IMR-90 (cell line): ENCODE measurements at regions of chr2 and their contacts with region 1.

Region 1: DNA sequence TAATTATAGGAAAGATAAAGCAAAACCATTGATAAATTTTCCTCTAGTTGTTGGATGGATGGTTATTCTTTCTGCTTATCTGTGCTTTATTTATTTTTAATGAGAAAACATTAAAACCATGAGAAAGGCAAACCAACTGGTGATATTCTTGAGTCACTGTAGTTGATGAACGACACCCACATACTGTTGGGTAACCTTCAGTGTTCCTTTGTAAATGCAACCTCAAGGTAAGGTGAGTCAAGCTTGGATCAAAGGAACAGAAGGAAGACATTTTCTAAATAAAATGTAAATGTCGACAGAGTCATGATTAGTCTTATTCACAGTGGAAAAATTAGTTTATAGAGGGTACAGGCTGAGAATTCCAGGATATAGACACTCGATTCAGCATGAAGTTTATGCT is 12.7 kb downstream of the ABCB11 start:
- DNase-seq: no peak
- ATAC-seq: no peak
- H3K4me3 ChIP-seq: no peak overlapping the region
- H3K27ac ChIP-seq: no peak overlapping the region
- H3K4me1 ChIP-seq: no peaks in the 10 kb centered on the region
- H3K27me3 ChIP-seq: no peaks in the 10 kb centered on the region
- CTCF ChIP-seq: no peak
- POLR2A ChIP-seq: no peak
- RAD21 ChIP-seq: no peak

Region 2: DNA sequence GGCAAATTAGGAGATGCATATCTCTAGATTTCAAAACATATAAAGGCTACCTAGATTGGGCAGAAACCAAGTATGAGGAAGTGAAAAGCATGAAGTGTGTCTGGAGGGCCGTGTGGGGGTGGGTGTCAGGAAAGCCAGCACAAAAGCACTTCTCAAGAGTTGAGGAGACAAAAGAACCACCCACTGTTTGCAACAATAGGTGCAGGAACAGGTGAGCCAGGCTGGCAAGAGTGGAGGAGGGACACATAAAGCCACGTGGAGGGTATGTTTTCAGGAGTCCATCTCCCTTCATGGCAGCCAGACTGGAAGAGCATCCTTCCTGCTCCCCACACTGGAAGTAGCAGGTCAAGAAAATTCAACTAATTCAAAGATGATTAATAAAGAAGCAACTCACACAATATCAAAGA is 465.9 kb before region 1 on chr2:
- CTCF ChIA-PET with region 1: no interaction called
- POLR2A ChIA-PET with region 1: no interaction called
- dilution Hi-C with region 1: no loop called
- in situ Hi-C with region 1: no loop called
- intact Hi-C with region 1: no loop called
- DNase-seq: no peak
- ATAC-seq: no peak
- H3K4me3 ChIP-seq: no peak overlapping the region
- H3K27ac ChIP-seq: no peak overlapping the region
- H3K4me1 ChIP-seq: no peaks in the 10 kb centered on the region
- H3K27me3 ChIP-seq: no peaks in the 10 kb centered on the region
- CTCF ChIP-seq: no peak
- POLR2A ChIP-seq: no peak
- RAD21 ChIP-seq: no peak

Region 3: DNA sequence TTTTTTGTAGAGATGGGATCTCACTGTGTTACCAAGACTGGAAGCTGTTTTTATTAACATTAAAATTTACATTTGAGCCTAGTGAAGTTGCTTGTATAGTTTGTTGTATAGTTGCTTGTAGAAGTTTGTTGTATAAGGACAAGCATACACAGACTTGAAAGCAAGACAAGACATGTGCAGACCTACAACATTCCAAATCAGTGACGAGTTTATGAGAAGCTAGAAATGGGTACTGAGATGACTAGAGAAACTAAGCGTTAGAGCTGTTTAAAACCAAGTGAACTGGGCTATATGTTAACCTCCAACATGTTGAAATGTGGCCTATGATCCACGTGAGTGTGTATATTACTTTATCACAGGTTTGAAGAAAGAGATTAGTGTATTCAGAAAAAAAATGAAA is 26.4 kb before region 1 on chr2:
- CTCF ChIA-PET with region 1: no interaction called
- POLR2A ChIA-PET with region 1: interaction called, 11 read pairs
- dilution Hi-C with region 1: no loop called
- in situ Hi-C with region 1: no loop called
- intact Hi-C with region 1: no loop called
- DNase-seq: peak; percentile 5
- ATAC-seq: peak; percentile 35; the same call in 1 of the 2 replicates
- H3K4me3 ChIP-seq: no peak overlapping the region
- H3K27ac ChIP-seq: no peak overlapping the region
- H3K4me1 ChIP-seq: no peaks in the 10 kb centered on the region
- H3K27me3 ChIP-seq: no peaks in the 10 kb centered on the region
- CTCF ChIP-seq: no peak
- POLR2A ChIP-seq: no peak
- RAD21 ChIP-seq: no peak